Prostate gland (tissue), 2 donors: ENCODE measurements at regions of chr15 and their contacts with region 1.

Region 1: DNA sequence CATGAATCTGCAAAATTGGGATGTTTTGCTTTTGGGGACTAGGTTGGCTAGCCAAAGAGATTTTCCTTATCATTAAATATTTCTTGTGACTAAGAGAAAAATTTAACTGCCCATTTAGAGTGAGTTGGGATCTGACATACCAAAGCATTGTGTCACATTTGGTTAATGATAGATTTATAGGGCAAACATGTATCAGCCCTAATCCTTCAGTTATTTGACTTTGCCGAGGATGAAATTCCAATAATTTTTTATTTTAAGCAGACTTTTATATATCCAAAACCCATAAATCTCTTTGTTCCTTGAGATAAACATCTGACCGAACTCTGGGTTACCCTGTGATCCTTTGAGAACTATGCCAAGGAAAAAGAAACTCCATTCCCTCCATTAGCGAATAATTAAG is 218.9 kb downstream of the CDIN1 start:
- DNase-seq: no peak
- H3K4me3 ChIP-seq: no peak overlapping the region
- H3K27ac ChIP-seq: no peak overlapping the region
- H3K4me1 ChIP-seq: no peaks in the 10 kb centered on the region
- H3K27me3 ChIP-seq: no peaks in the 10 kb centered on the region
- CTCF ChIP-seq: no peak
- POLR2A ChIP-seq: no peak

Region 2: GRCh38 chr15:36579792-36580431 is 218.5 kb before region 1 on chr15:
- intact Hi-C with region 1: loop called (anchors 10 kb)
- DNase-seq: no peak
- H3K4me3 ChIP-seq: peak overlapping the region; percentile 63 to 79
- H3K27ac ChIP-seq: peak overlapping the region; percentile 77 to 79
- H3K4me1 ChIP-seq: no peaks in the 10 kb centered on the region
- H3K27me3 ChIP-seq: no peaks in the 10 kb centered on the region
- CTCF ChIP-seq: no peak
- POLR2A ChIP-seq: peak; percentile 7

Region 3: DNA sequence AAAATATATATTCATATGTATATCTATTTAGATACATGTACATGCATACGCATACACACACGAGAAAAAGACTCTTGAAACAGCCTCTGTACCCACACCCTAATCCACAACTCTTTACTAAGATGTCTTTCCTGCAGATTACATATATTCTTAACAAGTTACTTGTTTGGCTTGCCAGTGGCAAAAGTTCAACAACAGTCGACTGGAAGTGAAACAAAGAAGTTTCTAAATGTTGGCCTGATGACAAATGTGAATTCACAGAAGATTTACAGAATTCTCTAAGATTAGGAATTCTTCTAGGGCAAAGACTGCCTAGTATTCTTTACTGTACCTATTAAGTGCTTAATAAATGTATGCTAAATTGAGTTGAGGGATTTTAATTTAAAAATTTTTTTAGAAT is 102.2 kb before region 1 on chr15:
- intact Hi-C with region 1: no loop called
- DNase-seq: no peak
- H3K4me3 ChIP-seq: no peak overlapping the region
- H3K27ac ChIP-seq: no peak overlapping the region
- H3K4me1 ChIP-seq: no peaks in the 10 kb centered on the region
- H3K27me3 ChIP-seq: no peaks in the 10 kb centered on the region
- CTCF ChIP-seq: no peak
- POLR2A ChIP-seq: no peak